ENCODE measurements at regions of chr20 and their contacts with region 1.

Region 1: GRCh38 chr20:19692685-19693119 is 65.4 kb upstream of the RIN2 start:
- DNase-seq: peak; percentile 15
- H3K4me3 Mint-ChIP-seq: no peak overlapping the region
- H3K27ac Mint-ChIP-seq: no peak overlapping the region
- H3K4me1 Mint-ChIP-seq: no peaks in the 10 kb centered on the region
- H3K27me3 Mint-ChIP-seq: peaks cover 1% of the 10 kb centered on the region

Region 2: GRCh38 chr20:19995220-19995863 is 302.6 kb after region 1 on chr20:
- intact Hi-C with region 1: loop called (anchors 10 kb)
- DNase-seq: no peak
- H3K4me3 Mint-ChIP-seq: no peak overlapping the region
- H3K27ac Mint-ChIP-seq: no peak overlapping the region
- H3K4me1 Mint-ChIP-seq: no peaks in the 10 kb centered on the region
- H3K27me3 Mint-ChIP-seq: peaks cover 6% of the 10 kb centered on the region

Measured in activated T-helper 2 cell treated with anti-CD3 and anti-CD28 coated beads, Interferon-gamma antibody, Interleukin-2, Interleukin-4, amounts not matched to agents 10 μg/mL and 5 μg/mL and 100 μg/mL, durations not matched to agents 14 hours and 24 hours and 36 hours (primary cell).